Activated CD4-positive, alpha-beta T cell treated with anti-CD3 and anti-CD28 coated beads, Interleukin-2, amount 10 ng/mL, durations not matched to agents 24 days and 14 days (primary cell): ENCODE measurements at regions of chr22 and their contacts with region 1.

Region 1: DNA sequence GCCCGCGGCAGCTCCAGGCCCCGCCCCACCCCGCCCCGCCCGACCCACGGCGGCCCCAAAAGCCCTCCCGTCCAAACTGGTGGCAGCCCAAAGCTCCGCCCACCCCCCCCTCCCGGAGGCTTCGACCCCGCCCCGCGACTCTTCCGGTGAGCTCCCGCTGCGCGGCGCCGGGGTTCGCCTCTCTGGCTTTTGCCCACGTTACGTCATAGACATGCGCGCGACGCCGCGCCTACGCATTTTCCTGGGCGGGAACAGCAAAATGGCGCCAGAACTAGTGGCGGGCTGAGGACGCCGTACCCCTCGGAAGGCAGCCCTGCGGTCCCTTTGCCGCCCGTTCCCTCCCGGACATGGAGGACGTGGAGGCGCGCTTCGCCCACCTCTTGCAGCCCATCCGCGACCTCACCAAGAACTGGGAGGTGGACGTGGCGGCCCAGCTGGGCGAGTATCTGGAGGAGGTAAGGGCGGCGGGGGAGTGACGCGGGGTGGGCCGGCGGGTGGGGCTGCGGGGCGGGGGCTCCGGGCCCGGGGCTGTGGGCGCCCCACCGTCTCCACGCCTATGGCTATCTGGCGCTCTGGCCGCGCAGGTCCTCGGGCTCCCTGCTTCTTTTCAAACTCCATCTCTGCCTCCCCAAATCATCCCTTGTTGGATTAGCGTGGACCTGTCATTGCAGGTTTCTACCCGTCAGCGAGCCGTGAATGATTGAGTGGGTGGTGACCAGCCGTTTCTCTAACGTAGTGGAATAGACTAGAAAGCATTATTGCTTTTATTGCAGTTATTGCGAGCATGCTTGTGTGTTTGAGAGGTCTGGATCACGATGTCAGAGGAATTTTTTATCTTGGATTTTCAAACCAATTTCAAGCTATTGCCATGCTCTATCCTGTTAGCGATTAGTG is at the start of gene NCAPH2:
- DNase-seq: peak; percentile 100
- H3K4me3 Mint-ChIP-seq: peak within 1 kb of the TSS; percentile 90
- H3K27ac Mint-ChIP-seq: peak within 1 kb of the TSS; percentile 97
- H3K4me1 Mint-ChIP-seq: peaks cover 17% of the 10 kb centered on the region
- H3K27me3 Mint-ChIP-seq: peaks cover 1% of the 10 kb centered on the region
- total RNA-seq, gene NCAPH2: 131 and 133 TPM in 2 replicates

Region 2: GRCh38 chr22:50185384-50186087 is 322.7 kb before region 1 on chr22 and contains the start of gene TRABD:
- intact Hi-C with region 1: no loop called
- DNase-seq: peak; percentile 96
- H3K4me3 Mint-ChIP-seq: peak within 1 kb of the TSS; percentile 96
- H3K27ac Mint-ChIP-seq: peak within 1 kb of the TSS; percentile 92
- H3K4me1 Mint-ChIP-seq: peaks cover 19% of the 10 kb centered on the region
- H3K27me3 Mint-ChIP-seq: peaks cover 2% of the 10 kb centered on the region
- total RNA-seq, gene TRABD: 94.4 and 97.4 TPM in 2 replicates

Region 3: DNA sequence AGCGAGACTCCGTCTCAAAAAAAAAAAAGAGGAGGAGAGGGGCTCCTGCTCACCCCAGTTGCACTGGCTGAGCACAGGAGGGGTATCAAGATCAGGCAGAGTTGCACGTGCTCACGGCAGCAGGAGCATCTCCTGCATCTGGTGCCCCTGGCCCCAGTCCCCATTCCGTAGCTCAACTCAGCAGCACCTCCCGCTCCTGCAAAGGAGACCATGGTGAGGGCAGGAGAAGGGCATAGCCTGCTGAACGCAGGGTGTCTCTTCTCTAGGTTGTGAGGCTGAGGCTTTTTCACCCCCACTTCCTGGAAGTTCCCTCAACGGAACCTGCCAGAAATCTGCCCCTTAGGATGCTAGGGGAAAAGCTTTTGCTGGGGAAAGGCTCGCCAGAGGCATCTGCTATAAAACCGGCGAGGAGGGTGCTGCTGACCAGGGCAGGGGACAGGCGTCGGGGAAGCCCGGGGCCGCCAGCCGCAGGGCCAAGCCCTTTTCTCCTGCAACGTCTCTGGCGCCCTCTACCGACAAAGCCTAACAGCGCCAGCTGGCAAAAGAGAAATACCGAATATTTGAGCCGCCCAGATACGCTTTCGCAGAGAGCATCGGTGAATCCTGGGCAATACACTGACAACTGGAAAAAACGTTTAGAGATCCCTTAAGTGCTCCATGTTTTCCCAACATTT is 166.1 kb before region 1 on chr22:
- intact Hi-C with region 1: loop called (anchors 10 kb)
- DNase-seq: peak; percentile 97
- H3K4me3 Mint-ChIP-seq: peak overlapping the region; percentile 80
- H3K27ac Mint-ChIP-seq: peak overlapping the region; percentile 89
- H3K4me1 Mint-ChIP-seq: peaks cover 4% of the 10 kb centered on the region
- H3K27me3 Mint-ChIP-seq: no peaks in the 10 kb centered on the region

Region 4: DNA sequence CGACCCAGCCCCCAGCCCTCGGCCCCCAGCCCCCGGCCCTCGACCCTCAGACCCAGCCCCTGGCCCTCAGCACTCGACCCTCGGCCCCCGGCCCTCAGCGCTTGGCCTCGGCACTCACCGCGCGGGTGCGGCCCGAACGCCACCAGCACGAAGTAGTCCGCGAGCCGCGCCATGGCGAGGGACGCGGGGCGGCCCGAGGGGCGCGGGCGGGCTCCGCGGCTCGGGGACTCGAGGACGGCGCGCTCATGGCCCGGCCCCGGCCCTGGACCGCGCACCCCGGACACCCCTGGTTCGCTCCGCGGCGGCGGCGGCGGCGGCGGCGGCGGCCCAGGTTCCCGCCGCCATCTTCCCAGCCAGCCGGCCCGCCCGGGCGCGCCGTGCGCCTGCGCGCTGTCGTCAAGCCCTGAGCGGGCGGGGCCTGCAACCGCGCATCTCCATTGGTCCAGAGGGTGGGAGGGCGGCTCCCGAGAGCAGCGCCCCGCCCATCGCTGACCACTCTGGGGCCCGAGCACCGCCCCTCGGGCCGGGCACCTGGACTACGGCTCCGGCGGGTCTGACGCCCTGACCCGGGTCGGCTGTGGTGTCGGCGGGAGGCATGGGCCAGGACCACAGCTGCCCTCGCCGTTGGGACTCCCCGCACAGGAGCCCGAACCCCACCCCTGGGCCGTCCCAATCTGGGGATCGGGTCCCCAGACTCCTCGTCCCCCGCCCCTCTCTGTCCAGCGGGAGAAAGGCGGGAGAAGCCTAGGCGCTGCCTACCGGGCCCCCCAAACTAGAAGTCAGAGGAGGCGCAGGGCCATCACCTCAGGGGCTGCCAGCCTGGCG is 33.4 kb before region 1 on chr22 and contains the start of gene SBF1:
- intact Hi-C with region 1: loop called (anchors 2 kb)
- DNase-seq: peak; percentile 98
- H3K4me3 Mint-ChIP-seq: peak within 1 kb of the TSS; percentile 95
- H3K27ac Mint-ChIP-seq: peak within 1 kb of the TSS; percentile 93
- H3K4me1 Mint-ChIP-seq: peaks cover 39% of the 10 kb centered on the region
- H3K27me3 Mint-ChIP-seq: peaks cover 11% of the 10 kb centered on the region
- total RNA-seq, gene SBF1: 108 and 115 TPM in 2 replicates

Region 5: DNA sequence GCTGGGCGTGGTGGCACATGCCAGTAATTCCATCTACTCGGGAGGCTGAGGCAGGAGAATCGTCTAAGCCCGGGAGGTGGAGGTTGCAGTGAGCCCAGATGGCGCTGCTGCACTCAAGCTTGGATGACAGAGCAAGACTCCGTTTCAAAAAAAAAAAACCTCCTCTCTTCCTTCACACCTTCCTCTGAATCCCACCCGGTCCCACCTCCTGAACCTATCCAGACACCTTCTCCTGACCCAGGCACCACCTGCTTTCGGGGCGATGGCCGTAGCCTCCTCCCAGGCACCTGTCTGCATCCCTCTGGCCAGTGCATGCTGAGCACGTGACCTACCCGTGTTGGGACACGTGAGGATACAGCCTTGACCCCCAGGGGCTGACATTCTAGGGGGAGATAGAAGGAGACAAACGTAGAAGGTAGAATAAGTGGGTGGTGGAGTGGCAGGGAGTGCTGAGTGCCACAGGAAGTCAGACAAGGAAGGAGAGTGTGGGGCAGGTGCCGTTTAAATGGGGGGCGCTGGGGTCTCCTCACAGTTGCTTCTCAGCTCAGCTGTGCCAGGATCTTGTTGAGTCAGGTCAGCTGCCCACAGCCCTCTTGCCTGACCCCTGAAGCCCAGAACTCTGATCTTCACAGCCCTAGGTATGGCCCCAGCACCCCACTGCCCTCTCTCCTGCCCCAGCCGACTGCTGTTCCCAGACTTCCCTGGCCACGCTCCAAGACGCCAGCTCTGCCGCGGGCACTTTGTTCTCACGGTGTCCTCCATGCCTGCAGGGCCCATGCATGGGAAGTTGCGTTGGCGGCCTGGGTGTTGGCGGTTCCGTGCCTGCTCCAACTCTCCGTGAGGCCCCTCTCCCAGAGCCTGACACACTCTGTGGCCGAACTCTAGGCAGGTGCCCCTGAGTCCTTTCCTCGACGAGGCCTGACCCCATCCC is 22.8 kb before region 1 on chr22:
- intact Hi-C with region 1: no loop called
- DNase-seq: no peak
- H3K4me3 Mint-ChIP-seq: no peak overlapping the region
- H3K27ac Mint-ChIP-seq: no peak overlapping the region
- H3K4me1 Mint-ChIP-seq: peaks cover 3% of the 10 kb centered on the region
- H3K27me3 Mint-ChIP-seq: peaks cover 2% of the 10 kb centered on the region

Region 6: GRCh38 chr22:50530877-50531545 is 22.8 kb after region 1 on chr22:
- intact Hi-C with region 1: loop called (anchors 1 kb)
- DNase-seq: peak; percentile 96
- H3K4me3 Mint-ChIP-seq: peak overlapping the region; percentile 96
- H3K27ac Mint-ChIP-seq: peak overlapping the region; percentile 100
- H3K4me1 Mint-ChIP-seq: peaks cover 47% of the 10 kb centered on the region
- H3K27me3 Mint-ChIP-seq: no peaks in the 10 kb centered on the region

Region 7: DNA sequence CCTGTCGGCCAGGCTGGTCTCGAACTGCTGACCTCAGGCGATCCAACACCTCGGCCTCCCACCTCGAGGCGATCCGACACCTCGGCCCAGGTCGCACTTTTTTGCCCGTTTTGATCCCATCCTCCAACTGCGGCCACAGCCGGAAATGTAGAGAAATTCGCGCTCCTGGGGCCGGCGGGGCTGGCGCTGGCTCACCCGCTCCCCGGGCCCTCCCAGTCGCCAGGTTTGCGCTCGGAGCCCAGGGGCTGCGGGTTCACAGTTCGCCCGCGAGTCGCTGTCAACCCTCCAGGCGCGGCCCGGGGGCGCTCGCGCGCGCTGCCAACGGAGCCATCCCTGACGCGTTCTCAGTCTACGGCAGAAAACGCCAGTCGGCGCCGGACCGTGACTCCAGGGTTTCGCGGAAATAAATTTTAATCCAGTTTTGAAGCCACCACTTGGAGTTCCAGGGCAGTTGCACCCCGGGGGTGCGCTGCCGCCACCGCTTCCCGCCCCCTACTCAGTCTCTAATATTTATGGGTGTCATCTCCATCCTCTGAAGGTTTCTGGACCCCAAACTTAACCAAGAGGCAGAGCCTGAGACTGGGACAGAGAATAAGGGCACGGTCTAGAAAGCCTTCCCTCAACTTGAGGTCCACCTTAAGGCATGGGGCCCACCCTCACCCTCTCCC is 36.0 kb after region 1 on chr22:
- intact Hi-C with region 1: no loop called
- DNase-seq: peak; percentile 95
- H3K4me3 Mint-ChIP-seq: peak overlapping the region; percentile 72
- H3K27ac Mint-ChIP-seq: peak overlapping the region; percentile 86
- H3K4me1 Mint-ChIP-seq: peaks cover 56% of the 10 kb centered on the region
- H3K27me3 Mint-ChIP-seq: no peaks in the 10 kb centered on the region

Region 8: GRCh38 chr22:50620593-50621355 is 112.5 kb after region 1 on chr22:
- intact Hi-C with region 1: loop called (anchors 1 kb)
- DNase-seq: peak; percentile 92
- H3K4me3 Mint-ChIP-seq: peak overlapping the region; percentile 85
- H3K27ac Mint-ChIP-seq: peak overlapping the region; percentile 99
- H3K4me1 Mint-ChIP-seq: peaks cover 35% of the 10 kb centered on the region
- H3K27me3 Mint-ChIP-seq: no peaks in the 10 kb centered on the region